ENCODE measurements at regions of chr1 and their contacts with region 1.

Region 1: DNA sequence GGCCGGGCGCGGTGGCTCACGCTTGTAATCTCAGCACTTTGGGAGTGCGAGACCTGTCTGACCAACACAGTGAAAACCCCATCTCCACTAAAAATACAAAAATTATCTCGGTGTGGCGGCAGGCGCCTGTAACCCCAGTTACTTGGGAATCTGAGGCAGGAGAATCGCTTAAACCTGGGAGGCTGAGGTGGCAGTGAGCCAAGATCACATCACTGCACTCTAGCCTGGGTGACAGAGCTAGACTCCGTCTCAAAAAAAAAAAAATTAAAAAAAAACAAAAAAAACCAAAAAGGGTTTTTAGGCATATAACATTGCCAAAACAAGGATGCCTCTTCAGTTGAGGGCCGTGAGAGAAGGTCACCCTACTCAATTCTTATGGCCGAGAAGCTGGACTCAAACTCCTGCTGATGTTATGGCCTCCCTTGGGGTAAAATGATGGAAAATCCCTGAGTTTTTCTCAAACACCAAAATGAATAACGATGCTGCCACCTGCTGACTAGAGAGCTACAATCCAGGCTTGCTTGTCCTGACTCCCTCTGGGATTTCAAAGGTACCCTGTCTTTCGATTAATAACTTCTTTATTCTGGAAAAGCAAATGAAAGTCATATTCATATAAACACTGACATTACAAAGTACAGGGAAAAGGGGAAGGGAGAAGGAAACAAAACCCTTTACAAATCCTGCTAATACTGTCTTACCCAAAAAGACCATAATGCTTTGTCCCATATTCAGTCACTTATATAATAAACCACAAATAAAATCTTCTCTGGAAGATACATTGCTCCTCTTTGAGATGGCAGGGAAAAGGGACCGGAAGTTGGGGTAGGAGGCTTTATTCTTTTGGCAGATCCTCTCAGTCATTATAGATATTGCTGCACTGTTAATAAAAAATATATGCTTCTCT is 10.7 kb downstream of the RAB42 start:
- DNase-seq: no peak

Region 2: DNA sequence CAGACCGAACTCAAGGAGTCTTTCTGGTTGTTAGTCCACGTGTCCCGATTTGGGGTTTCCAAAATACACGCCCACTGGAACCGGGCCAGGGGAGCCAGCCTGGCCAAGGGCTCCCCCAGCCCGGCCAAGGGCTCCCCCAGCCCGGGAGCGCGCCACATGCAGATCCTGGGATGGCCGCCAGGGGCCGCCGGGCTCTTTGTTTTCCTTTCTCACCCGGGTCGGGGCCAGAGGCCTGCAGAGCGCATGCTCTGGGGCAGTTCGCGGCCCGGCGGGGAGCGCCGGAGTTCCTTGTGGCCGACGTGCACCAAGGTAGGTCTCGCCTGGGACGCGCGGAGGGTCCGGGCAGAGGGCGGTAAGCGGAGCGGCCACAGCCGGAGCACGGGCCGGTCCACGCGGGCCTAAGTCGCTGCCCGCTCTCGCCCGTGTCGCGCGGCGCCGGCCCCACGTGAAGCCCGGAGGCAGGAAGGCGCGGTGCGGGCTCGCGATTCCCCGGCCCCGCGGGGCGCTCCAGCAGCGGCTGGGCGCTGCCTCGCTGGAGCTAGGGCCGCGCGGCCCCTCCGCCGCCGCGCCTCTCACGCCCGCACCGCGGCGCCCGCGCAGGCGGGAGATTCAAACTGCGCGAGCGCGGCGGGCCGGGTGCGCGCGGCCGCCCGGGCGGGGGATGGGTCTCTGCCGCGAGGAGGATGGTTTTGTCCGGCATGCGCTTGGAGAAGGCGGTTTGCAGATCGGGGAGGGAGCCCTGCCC is 84.6 kb before region 1 on chr1:
- intact Hi-C with region 1: loop called (anchors 5 kb)
- DNase-seq: peak; percentile 96

Region 3: GRCh38 chr1:28530456-28530855 is 72.3 kb before region 1 on chr1:
- intact Hi-C with region 1: loop called in 1 of 2 experiments (anchors 5 kb)
- DNase-seq: no peak

Region 4: DNA sequence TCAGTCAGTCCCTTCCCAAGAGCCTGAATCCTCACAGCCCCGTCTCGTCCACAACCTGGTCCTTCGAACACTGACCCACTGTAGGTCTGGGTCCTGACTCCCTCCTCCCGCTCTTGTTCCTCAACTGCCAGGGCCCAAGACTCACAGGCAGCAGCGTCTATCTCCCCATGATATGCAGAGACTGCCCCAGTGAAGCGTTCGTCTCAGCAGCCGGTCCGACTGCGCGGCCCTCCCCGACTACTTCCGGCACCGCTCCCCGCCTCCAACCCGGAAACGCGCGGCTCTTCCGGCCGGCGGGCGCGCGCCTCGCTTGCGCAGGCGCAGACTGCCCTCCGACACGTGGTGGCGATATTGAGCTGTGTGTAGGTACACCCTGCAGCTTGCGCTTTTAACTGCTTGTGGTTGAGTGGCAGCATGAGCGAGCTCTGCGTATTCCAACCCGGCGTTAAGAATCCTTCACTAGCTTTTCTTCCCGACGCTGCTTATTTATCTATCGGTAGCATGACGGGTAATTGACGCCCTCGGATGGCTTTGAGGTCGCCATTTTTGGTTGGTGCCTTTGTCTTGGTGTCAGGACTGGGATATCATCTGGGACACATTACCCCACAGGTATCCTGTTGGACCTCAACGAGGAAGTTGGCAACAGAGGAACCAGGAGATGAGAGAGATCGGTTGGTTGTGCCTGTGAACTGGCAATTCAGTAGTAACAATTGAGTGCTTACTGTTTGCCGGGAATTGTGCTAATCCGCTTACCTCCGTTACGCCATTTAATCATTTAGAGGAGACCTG is 40.3 kb after region 1 on chr1 and contains the start of gene TAF12:
- intact Hi-C with region 1: no loop called
- DNase-seq: peak; percentile 96
- total RNA-seq, gene TAF12: 14.9 to 16.5 TPM

Measured in posterior vena cava (tissue), 2 donors.